HepG2 (cell line): ENCODE measurements at regions of chr22 and their contacts with region 1.

Region 1: GRCh38 chr22:46355371-46355995 is 20.0 kb downstream of the TRMU start:
- DNase-seq: peak; percentile 37
- ATAC-seq: peak; percentile 74
- H3K4me3 ChIP-seq: no peak overlapping the region
- H3K27ac ChIP-seq: no peak overlapping the region
- H3K4me1 ChIP-seq: no peaks in the 10 kb centered on the region
- H3K27me3 ChIP-seq: no peaks in the 10 kb centered on the region
- CTCF ChIP-seq: peak; percentile 94
- EP300 ChIP-seq: no peak
- POLR2A ChIP-seq: no peak
- RAD21 ChIP-seq: peak; percentile 95

Region 2: DNA sequence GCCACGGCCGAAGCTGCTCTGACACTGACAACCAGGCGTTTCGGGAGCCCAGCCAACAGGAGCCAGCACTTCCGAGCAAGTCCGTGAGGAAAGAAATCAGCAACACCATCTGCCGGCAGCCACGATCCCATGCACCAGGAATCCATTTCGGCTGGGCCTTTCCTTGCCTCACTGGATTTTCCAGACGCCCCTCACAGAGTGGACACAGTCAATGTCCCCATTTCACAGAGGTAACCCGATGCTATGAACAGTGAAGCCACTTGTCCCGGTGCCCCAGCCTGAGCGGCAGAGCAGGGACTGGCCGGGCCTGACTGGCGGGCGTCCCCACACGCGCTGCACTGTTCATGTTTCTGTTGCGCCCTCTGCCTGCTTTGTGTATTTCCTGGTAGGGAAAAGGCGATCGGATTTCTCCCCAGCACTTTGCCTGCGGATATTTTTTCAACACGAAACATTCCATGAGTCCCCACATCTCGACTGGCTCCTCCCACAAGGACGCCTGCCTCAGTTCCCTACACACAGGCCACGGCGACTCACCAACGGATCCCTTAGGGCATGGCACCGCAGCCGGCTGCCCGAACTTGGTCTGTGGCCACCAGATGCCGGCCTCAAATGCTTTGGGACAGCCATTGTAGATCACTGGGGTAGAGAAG is 35.3 kb after region 1 on chr22:
- CTCF ChIA-PET with region 1: interaction called, 25 read pairs
- POLR2A ChIA-PET with region 1: no interaction called
- in situ Hi-C with region 1: loop called (anchors 5 kb)
- intact Hi-C with region 1: no loop called
- DNase-seq: peak; percentile 64
- ATAC-seq: peak; percentile 86
- H3K4me3 ChIP-seq: peak overlapping the region in 2 of 3 experiments; percentile 47 to 58; a peak in 4 of 6 replicates
- H3K27ac ChIP-seq: no peak overlapping the region
- H3K4me1 ChIP-seq: peaks cover 21% of the 10 kb centered on the region
- H3K27me3 ChIP-seq: no peaks in the 10 kb centered on the region
- CTCF ChIP-seq: peak; percentile 89
- EP300 ChIP-seq: no peak
- POLR2A ChIP-seq: no peak
- RAD21 ChIP-seq: peak; percentile 95

Region 3: GRCh38 chr22:46500201-46500600 is 144.7 kb after region 1 on chr22:
- CTCF ChIA-PET with region 1: no interaction called
- POLR2A ChIA-PET with region 1: no interaction called
- in situ Hi-C with region 1: no loop called
- intact Hi-C with region 1: no loop called
- DNase-seq: no peak
- ATAC-seq: no peak
- H3K4me3 ChIP-seq: no peak overlapping the region
- H3K27ac ChIP-seq: no peak overlapping the region
- H3K4me1 ChIP-seq: no peaks in the 10 kb centered on the region
- H3K27me3 ChIP-seq: peaks cover 0 to 4% of the 10 kb centered on the region in 2 experiments; a peak in 3 of 5 replicates
- CTCF ChIP-seq: no peak
- EP300 ChIP-seq: no peak
- POLR2A ChIP-seq: no peak
- RAD21 ChIP-seq: no peak

Region 4: DNA sequence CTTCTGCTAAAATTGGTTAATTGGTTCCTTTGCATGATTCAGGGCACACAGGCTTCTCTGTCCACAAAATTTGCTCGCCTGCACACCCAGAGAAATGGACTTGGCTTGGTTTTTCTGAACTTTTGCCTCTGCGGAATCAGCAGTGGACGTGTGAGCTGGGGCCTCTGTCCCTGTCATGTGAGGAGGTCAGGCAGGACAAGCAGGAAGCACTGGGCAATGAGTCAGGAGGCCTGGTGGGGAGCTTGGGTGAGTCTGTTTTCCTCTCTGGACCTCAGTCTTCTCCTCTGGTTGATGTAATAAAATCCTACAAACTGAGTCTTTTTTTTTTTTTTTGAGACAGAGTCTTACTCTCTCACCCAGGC is 192.4 kb after region 1 on chr22:
- CTCF ChIA-PET with region 1: no interaction called
- POLR2A ChIA-PET with region 1: no interaction called
- in situ Hi-C with region 1: no loop called
- intact Hi-C with region 1: loop called (anchors 5 kb)
- DNase-seq: peak; percentile 58
- ATAC-seq: peak; percentile 74
- H3K4me3 ChIP-seq: peak overlapping the region; percentile 5 to 54 (median 32)
- H3K27ac ChIP-seq: peak overlapping the region; percentile 42
- H3K4me1 ChIP-seq: peaks cover 40% of the 10 kb centered on the region
- H3K27me3 ChIP-seq: 0 out of 5 replicates have a peak, but pooled peaks cover 2% of the 10 kb centered on the region in 2 experiments
- CTCF ChIP-seq: no peak
- EP300 ChIP-seq: no peak
- POLR2A ChIP-seq: no peak
- RAD21 ChIP-seq: no peak